ENCODE measurements at regions of chr2 and their contacts with region 1.

Region 1: GRCh38 chr2:158903711-158904443 is 64.6 kb upstream of the TANC1 start:
- DNase-seq: no peak
- ATAC-seq: no peak
- H3K4me3 ChIP-seq: no peak overlapping the region
- H3K27ac ChIP-seq: no peak overlapping the region
- H3K4me1 ChIP-seq: peaks cover 0 to 4% of the 10 kb centered on the region in 2 experiments; a peak in 1 of 4 replicates
- H3K27me3 ChIP-seq: no peaks in the 10 kb centered on the region
- CTCF ChIP-seq: no peak
- POLR2A ChIP-seq: no peak
- RAD21 ChIP-seq: no peak

Region 2: GRCh38 chr2:159118115-159118858 is 214.4 kb after region 1 on chr2:
- CTCF ChIA-PET with region 1: interaction called, 29 read pairs
- POLR2A ChIA-PET with region 1: no interaction called
- RAD21 ChIA-PET with region 1: interaction called, 3 to 6 read pairs
- intact Hi-C with region 1: loop called (anchors 1 kb)
- DNase-seq: peak; percentile 57
- ATAC-seq: peak; percentile 95
- H3K4me3 ChIP-seq: no peak overlapping the region
- H3K27ac ChIP-seq: no peak overlapping the region
- H3K4me1 ChIP-seq: peaks cover 4 to 5% of the 10 kb centered on the region in 2 experiments; a peak in 3 of 4 replicates
- H3K27me3 ChIP-seq: no peaks in the 10 kb centered on the region
- CTCF ChIP-seq: peak; percentile 86 to 98 (median 94)
- POLR2A ChIP-seq: no peak
- RAD21 ChIP-seq: peak; percentile 95

Region 3: DNA sequence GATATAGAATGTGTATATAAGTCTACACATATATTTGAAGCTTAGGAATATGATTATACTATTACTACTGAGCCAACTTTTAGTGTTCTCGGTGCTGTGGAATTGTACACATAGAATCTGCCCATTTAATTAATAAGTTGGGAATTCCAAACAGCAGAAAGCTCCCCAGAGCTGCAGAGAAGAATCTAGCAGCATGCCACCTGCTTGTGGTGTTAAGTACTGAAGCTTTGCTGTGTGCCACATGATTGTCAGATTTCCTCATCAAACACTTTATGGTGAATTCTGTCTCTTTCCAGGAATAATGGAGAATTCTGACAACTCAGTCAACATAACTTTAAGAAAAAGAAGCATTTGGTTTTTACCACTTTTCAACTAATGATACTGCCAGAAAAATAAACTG is 264.8 kb after region 1 on chr2:
- CTCF ChIA-PET with region 1: no interaction called
- POLR2A ChIA-PET with region 1: no interaction called
- RAD21 ChIA-PET with region 1: no interaction called
- intact Hi-C with region 1: loop called (anchors 1 kb)
- DNase-seq: no peak
- ATAC-seq: no peak
- H3K4me3 ChIP-seq: no peak overlapping the region
- H3K27ac ChIP-seq: no peak overlapping the region
- H3K4me1 ChIP-seq: no peaks in the 10 kb centered on the region
- H3K27me3 ChIP-seq: no peaks in the 10 kb centered on the region
- CTCF ChIP-seq: 0 out of 6 replicates have a peak, but pooled peaks of 2 of the 3 experiments have one; percentile 17 to 19
- POLR2A ChIP-seq: no peak
- RAD21 ChIP-seq: peak; percentile 15; the same call in 1 of the 2 replicates

Region 4: GRCh38 chr2:159185401-159186130 is 281.7 kb after region 1 on chr2:
- CTCF ChIA-PET with region 1: no interaction called
- POLR2A ChIA-PET with region 1: no interaction called
- RAD21 ChIA-PET with region 1: no interaction called
- intact Hi-C with region 1: loop called (anchors 1 kb)
- DNase-seq: peak; percentile 19
- ATAC-seq: peak; percentile 89
- H3K4me3 ChIP-seq: no peak overlapping the region
- H3K27ac ChIP-seq: no peak overlapping the region
- H3K4me1 ChIP-seq: no peaks in the 10 kb centered on the region
- H3K27me3 ChIP-seq: no peaks in the 10 kb centered on the region
- CTCF ChIP-seq: peak; percentile 55 to 66 (median 58); a peak in 5 of 6 replicates
- POLR2A ChIP-seq: no peak
- RAD21 ChIP-seq: peak; percentile 86

Region 5: GRCh38 chr2:159807183-159808031 is 903.5 kb after region 1 on chr2:
- CTCF ChIA-PET with region 1: no interaction called
- POLR2A ChIA-PET with region 1: no interaction called
- RAD21 ChIA-PET with region 1: no interaction called
- intact Hi-C with region 1: loop called (anchors 5 kb)
- DNase-seq: peak; percentile 52
- ATAC-seq: peak; percentile 81
- H3K4me3 ChIP-seq: no peak overlapping the region
- H3K27ac ChIP-seq: no peak overlapping the region
- H3K4me1 ChIP-seq: no peaks in the 10 kb centered on the region
- H3K27me3 ChIP-seq: no peaks in the 10 kb centered on the region
- CTCF ChIP-seq: peak; percentile 74 to 78 (median 76)
- POLR2A ChIP-seq: no peak
- RAD21 ChIP-seq: peak; percentile 79

Region 6: DNA sequence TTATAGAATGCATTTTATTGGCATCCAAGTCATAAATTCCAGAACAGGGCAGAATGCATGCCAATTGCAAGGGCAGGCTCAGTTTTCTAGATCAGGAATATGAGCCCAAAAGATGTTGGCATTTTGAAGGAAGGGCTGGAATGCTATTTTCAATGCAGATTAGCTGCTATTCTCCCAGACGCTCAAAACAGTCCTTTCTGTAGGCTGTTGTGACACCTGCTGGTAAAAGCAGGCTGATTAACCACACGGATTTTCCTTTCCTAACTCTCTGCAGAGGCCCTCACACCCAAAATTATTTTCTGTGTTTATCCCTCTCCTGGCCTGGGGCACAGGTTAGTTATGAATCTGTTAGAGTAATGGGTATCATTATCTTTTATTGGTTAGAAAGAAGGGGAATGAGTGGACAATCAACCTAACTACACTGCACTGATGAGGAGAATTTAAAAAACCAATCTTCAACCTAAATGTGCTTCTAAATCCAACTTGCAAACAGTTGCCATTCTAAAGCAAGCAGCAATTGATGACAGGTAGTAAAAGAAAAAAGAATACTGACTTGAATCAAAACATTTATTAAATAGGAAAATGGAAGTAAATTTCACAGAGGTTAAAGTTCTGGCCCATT is 1064.5 kb after region 1 on chr2:
- CTCF ChIA-PET with region 1: interaction called, 4 read pairs
- POLR2A ChIA-PET with region 1: no interaction called
- RAD21 ChIA-PET with region 1: no interaction called
- intact Hi-C with region 1: loop called (anchors 10 kb)
- DNase-seq: peak; percentile 35
- ATAC-seq: peak; percentile 89
- H3K4me3 ChIP-seq: no peak overlapping the region
- H3K27ac ChIP-seq: no peak overlapping the region
- H3K4me1 ChIP-seq: no peaks in the 10 kb centered on the region
- H3K27me3 ChIP-seq: no peaks in the 10 kb centered on the region
- CTCF ChIP-seq: peak; percentile 59 to 67 (median 64)
- POLR2A ChIP-seq: no peak
- RAD21 ChIP-seq: peak; percentile 89